ENCODE measurements at regions of chr17 and their contacts with region 1.

Region 1: GRCh38 chr17:66255112-66255511 is 25.9 kb upstream of the APOH start:
- DNase-seq: no peak
- H3K4me3 ChIP-seq: no peak overlapping the region
- H3K27ac ChIP-seq: no peak overlapping the region
- H3K4me1 ChIP-seq: no peaks in the 10 kb centered on the region
- H3K27me3 ChIP-seq: no peaks in the 10 kb centered on the region
- CTCF ChIP-seq: peak; percentile 83

Region 2: GRCh38 chr17:66191593-66192382 is 63.3 kb before region 1 on chr17 and contains the start of gene CEP112:
- intact Hi-C with region 1: no loop called
- DNase-seq: peak; percentile 77
- H3K4me3 ChIP-seq: peak within 1 kb of the TSS; percentile 96
- H3K27ac ChIP-seq: peak within 1 kb of the TSS; percentile 87
- H3K4me1 ChIP-seq: peaks cover 36% of the 10 kb centered on the region
- H3K27me3 ChIP-seq: no peaks in the 10 kb centered on the region
- CTCF ChIP-seq: peak; percentile 22
- total RNA-seq, gene CEP112: 14.5 TPM

Region 3: GRCh38 chr17:66207936-66208335 is 47.2 kb before region 1 on chr17:
- intact Hi-C with region 1: no loop called
- DNase-seq: no peak
- H3K4me3 ChIP-seq: no peak overlapping the region
- H3K27ac ChIP-seq: no peak overlapping the region
- H3K4me1 ChIP-seq: peaks cover 19% of the 10 kb centered on the region
- H3K27me3 ChIP-seq: no peaks in the 10 kb centered on the region
- CTCF ChIP-seq: peak; percentile 34

Region 4: GRCh38 chr17:66567234-66568170 is 312.4 kb after region 1 on chr17:
- intact Hi-C with region 1: loop called (anchors 10 kb)
- DNase-seq: peak; percentile 72
- H3K4me3 ChIP-seq: no peak overlapping the region
- H3K27ac ChIP-seq: no peak overlapping the region
- H3K4me1 ChIP-seq: no peaks in the 10 kb centered on the region
- H3K27me3 ChIP-seq: no peaks in the 10 kb centered on the region
- CTCF ChIP-seq: peak; percentile 79

Region 5: DNA sequence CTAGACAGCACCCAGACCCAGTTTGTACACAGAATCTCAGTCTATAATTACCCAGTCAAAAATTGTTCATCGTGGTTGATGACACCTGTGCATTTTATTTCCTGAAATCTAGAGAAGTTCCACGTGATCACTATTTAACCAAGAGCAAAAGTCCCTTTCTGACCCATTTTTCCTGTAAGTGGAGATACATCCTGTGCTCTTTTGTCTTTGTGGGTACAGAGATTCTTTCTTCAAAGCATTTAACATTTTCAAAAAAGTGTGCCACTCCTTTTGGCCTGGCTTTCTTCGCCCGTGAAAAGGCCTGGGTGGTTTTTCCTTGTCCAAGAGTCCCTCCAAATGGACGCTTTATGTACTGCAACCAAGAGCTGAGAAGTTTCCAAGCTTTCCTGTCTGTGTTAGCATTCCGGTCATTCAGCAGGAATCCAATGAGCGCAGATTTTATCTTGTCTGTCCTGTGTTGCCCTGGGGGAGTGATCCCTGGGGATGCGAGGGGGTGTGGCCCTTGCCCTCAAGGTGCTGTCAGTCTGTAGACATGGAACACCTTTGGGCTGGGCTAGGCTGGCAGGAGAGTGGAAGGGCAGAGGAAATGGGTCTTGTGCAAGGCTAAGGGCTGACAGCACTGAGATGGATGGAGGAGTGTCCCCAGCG is 418.7 kb after region 1 on chr17:
- intact Hi-C with region 1: loop called (anchors 5 kb)
- DNase-seq: no peak
- H3K4me3 ChIP-seq: no peak overlapping the region
- H3K27ac ChIP-seq: no peak overlapping the region
- H3K4me1 ChIP-seq: peaks cover 3% of the 10 kb centered on the region
- H3K27me3 ChIP-seq: no peaks in the 10 kb centered on the region
- CTCF ChIP-seq: peak; percentile 77

Measured in left ventricle myocardium inferior (tissue), 1 donor.